ENCODE measurements at regions of chr22 and their contacts with region 1.

Region 1: GRCh38 chr22:46762238-46763050 is at the start of gene TBC1D22A:
- DNase-seq: peak; percentile 95
- CTCF ChIP-seq: no peak

Region 2: GRCh38 chr22:46721501-46722085 is 40.9 kb before region 1 on chr22:
- CTCF ChIA-PET with region 1: interaction called, 10 read pairs
- POLR2A ChIA-PET with region 1: no interaction called
- DNase-seq: no peak
- CTCF ChIP-seq: no peak

Region 3: DNA sequence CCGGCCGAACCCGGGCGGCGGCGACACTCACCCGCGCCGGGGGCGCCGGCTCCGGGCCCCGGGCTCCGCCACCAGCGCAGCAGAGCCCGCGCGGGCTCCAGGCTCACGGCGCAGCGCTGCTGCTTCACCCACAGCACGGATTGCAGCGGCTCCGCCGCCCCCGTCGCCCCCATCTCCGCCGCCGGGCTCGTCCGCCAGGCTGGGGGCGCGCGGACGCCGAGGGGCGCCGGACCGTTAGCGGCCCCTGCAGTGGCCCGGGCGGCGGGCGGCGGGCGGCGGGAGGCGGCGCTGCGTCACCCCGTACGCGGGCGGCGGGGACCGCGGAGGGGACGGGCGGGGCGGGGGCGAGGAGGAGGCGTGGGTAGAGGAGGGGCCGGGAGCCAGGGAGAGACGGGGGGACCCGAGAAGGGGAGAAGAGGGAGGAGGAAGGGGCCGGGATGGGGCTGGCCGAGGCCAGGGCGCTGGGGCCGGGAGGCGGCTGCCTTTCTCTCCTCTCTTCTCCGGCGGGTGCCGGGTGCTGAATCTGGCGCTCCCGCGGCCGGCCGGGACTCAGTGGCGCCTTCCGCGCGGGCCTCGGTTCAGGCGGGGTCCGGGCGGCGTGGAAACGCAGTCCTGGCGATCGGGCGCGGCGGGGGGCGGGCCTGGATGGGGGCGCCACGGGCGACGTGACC is 24.3 kb before region 1 on chr22 and contains the start of gene CERK:
- CTCF ChIA-PET with region 1: interaction called, 49 read pairs
- POLR2A ChIA-PET with region 1: interaction called, 4 read pairs
- DNase-seq: peak; percentile 84
- CTCF ChIP-seq: no peak

Region 4: GRCh38 chr22:46748908-46749675 is 13.4 kb before region 1 on chr22:
- CTCF ChIA-PET with region 1: interaction called, 49 read pairs
- POLR2A ChIA-PET with region 1: interaction called, 10 read pairs
- DNase-seq: no peak
- CTCF ChIP-seq: no peak

Region 5: DNA sequence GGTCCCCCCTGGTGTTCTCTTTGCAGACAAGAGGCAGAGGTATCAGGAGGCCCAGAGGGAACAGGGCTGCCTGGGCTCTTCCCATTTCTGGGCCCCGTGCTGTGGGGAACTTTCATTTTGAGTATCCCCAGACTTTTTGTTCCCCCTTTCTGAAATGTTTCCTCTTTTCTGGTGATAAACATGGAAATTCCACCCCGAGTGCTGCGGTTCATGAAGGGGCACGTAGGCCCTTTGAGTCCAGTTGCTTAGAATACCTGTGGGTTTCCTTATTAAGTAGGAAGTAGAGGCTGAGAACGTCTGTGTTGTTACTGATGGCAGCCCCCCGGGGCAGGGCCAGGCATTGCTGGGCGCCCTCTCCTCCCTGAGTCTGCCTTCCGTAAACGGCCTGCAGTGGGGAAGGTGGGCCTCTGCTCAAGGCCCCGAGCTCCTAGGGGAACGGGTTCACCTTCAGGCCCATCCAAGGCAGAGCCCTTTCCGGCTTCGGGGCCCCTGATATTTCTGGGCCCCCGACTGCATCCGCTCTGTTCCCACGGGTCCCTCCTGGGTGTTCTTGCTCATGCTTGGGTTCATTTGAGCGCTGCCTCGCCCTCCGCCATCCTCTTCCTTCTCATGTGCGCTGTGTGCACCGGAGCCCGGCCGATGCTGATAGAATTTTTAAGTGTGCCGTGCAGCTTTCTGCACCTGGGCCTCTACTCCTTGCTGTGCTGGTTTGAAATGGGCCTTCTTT is 12.0 kb after region 1 on chr22:
- CTCF ChIA-PET with region 1: interaction called, 121 read pairs
- POLR2A ChIA-PET with region 1: interaction called, 39 read pairs
- DNase-seq: peak; percentile 66
- CTCF ChIP-seq: no peak

Region 6: GRCh38 chr22:46791201-46791731 is 28.8 kb after region 1 on chr22:
- CTCF ChIA-PET with region 1: interaction called, 18 read pairs
- POLR2A ChIA-PET with region 1: no interaction called
- DNase-seq: no peak
- CTCF ChIP-seq: no peak

Measured in GM10248 (cell line).